Naive thymus-derived CD4-positive, alpha-beta T cell (primary cell): ENCODE measurements at regions of chr9 and their contacts with region 1.

Region 1: DNA sequence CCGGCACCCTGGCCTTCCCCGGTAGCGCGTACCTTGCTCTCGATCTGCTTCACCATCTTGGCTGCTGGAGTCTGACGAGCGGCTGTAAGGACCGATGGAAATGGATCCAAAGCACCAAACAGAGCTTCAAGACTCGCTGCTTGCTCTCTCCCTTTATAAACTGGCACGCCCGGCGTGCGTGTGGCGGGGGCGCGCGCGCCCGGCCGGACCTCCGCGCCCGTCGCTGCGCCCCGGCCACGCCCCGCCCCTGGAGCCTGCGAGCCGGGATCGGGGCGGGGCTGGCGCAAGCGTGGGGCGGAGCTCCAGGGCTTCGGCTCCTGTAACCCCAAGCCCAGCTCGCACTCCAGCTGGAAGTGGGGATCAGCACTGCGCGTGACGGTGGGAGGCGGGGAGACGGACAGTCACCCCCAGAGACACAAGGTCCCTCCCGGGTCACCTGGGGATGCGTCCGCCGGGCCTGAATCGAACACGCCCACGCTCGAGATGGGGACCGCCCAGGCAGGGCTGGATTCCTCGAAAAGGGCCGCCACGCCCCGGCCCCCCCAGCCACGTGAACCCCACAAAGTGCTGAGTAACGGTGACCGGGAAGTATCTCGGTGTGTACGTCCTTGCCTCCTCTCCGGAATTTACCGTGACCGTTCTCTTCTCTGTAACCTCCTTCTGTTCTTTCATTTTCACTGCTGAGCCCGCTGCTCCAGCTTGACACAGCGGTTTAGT is at the start of gene TXN:
- DNase-seq: peak; percentile 56 to 91 (median 74)
- ATAC-seq: peak; percentile 88
- H3K4me3 ChIP-seq: peak within 1 kb of the TSS; percentile 85
- H3K4me3 Mint-ChIP-seq: peak within 1 kb of the TSS; percentile 83 to 99 (median 96)
- H3K27ac ChIP-seq: peak within 1 kb of the TSS; percentile 65
- H3K27ac Mint-ChIP-seq: peak within 1 kb of the TSS; percentile 87 to 97 (median 89)
- H3K4me1 ChIP-seq: peaks cover 4 to 11% of the 10 kb centered on the region in 2 donors
- H3K4me1 Mint-ChIP-seq: peaks cover 16 to 52% (median 32%) of the 10 kb centered on the region in 7 donors
- H3K27me3 ChIP-seq: no peaks in the 10 kb centered on the region
- H3K27me3 Mint-ChIP-seq: peaks cover 0 to 5% (median 0%) of the 10 kb centered on the region in 5 donors
- total RNA-seq, gene TXN: 22.2 to 276 (median 24.9) TPM

Region 2: GRCh38 chr9:109012876-109013678 is 1243.5 kb before region 1 on chr9 and contains the start of gene CTNNAL1:
- CTCF ChIA-PET with region 1: no interaction called
- POLR2A ChIA-PET with region 1: no interaction called
- intact Hi-C with region 1: loop called (anchors 2 to 10 kb)
- DNase-seq: peak; percentile 68 to 88 (median 78)
- ATAC-seq: peak; percentile 98
- H3K4me3 ChIP-seq: peak within 1 kb of the TSS; percentile 72
- H3K4me3 Mint-ChIP-seq: peak within 1 kb of the TSS; percentile 93 to 99 (median 97)
- H3K27ac ChIP-seq: peak within 1 kb of the TSS; percentile 77
- H3K27ac Mint-ChIP-seq: peak within 1 kb of the TSS; percentile 79 to 95 (median 92)
- H3K4me1 ChIP-seq: peaks cover 6 to 13% of the 10 kb centered on the region in 2 donors
- H3K4me1 Mint-ChIP-seq: peaks cover 17 to 34% (median 21%) of the 10 kb centered on the region in 7 donors
- H3K27me3 ChIP-seq: no peaks in the 10 kb centered on the region
- H3K27me3 Mint-ChIP-seq: peaks cover 0 to 22% (median 4%) of the 10 kb centered on the region in 5 donors
- total RNA-seq, gene CTNNAL1: 1.1 to 9.9 (median 2.5) TPM

Region 3: GRCh38 chr9:109887079-109887478 is 369.5 kb before region 1 on chr9:
- CTCF ChIA-PET with region 1: no interaction called
- POLR2A ChIA-PET with region 1: no interaction called
- intact Hi-C with region 1: loop called in 1 of 2 experiments (anchors 2 kb)
- DNase-seq: no peak
- ATAC-seq: no peak
- H3K4me3 ChIP-seq: no peak overlapping the region
- H3K4me3 Mint-ChIP-seq: peak overlapping the region in 2 of 10 donors; percentile 14 to 73
- H3K27ac ChIP-seq: no peak overlapping the region
- H3K27ac Mint-ChIP-seq: peak overlapping the region in 3 of 9 donors; percentile 23 to 92 (median 88)
- H3K4me1 ChIP-seq: no peaks in the 10 kb centered on the region
- H3K4me1 Mint-ChIP-seq: peaks cover 7 to 82% (median 32%) of the 10 kb centered on the region in 7 donors
- H3K27me3 ChIP-seq: no peaks in the 10 kb centered on the region
- H3K27me3 Mint-ChIP-seq: no peaks in the 10 kb centered on the region

Region 4: DNA sequence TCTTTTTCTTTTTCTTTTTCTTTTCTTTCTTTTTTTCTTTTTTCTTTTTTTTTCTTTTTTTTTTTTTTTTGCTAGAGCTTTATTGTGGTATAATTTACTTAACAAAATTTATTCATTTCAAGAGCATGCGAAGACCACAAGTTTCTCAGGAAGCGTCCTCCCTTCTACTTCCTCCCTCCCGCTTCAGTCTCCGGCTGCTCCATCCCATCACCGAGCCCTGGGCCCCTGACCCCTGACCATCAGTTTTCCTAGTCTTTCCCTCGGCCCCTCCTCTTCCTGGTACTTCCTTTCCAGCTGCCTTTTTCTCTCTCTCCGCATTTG is 83.3 kb before region 1 on chr9:
- CTCF ChIA-PET with region 1: no interaction called
- POLR2A ChIA-PET with region 1: no interaction called
- intact Hi-C with region 1: loop called in 1 of 2 experiments (anchors 1 kb)
- DNase-seq: no peak
- ATAC-seq: no peak
- H3K4me3 ChIP-seq: no peak overlapping the region
- H3K4me3 Mint-ChIP-seq: peak overlapping the region in 8 of 10 donors; percentile 18 to 67 (median 50)
- H3K27ac ChIP-seq: no peak overlapping the region
- H3K27ac Mint-ChIP-seq: peak overlapping the region in 2 of 9 donors; percentile 28 to 64
- H3K4me1 ChIP-seq: no peaks in the 10 kb centered on the region
- H3K4me1 Mint-ChIP-seq: peaks cover 4 to 37% (median 7%) of the 10 kb centered on the region in 7 donors
- H3K27me3 ChIP-seq: no peaks in the 10 kb centered on the region
- H3K27me3 Mint-ChIP-seq: peaks cover 0 to 5% (median 0%) of the 10 kb centered on the region in 5 donors

Region 5: DNA sequence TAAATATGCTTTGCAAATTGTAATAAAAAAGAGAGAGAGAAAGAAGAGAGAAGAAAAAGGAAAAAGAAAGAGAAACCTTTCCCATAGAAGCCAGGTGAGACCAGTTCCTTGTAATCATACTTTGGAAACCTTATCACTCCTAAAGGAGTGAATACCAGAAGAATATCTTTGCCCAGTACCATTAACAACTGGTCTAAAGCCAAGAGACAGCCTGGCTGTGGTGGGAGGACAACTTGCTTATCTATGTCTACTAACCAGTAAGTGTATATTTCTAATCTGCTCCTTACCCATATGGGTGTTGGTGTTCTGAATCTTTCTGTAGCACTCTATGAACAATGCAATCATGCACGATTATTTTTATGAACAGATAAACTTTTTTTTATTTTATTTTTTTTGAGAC is 10.3 kb after region 1 on chr9:
- CTCF ChIA-PET with region 1: no interaction called
- POLR2A ChIA-PET with region 1: interaction called, 3 read pairs
- intact Hi-C with region 1: loop called in 1 of 2 experiments (anchors 1 kb)
- DNase-seq: no peak
- ATAC-seq: no peak
- H3K4me3 ChIP-seq: no peak overlapping the region
- H3K4me3 Mint-ChIP-seq: no peak overlapping the region
- H3K27ac ChIP-seq: no peak overlapping the region
- H3K27ac Mint-ChIP-seq: no peak overlapping the region
- H3K4me1 ChIP-seq: no peaks in the 10 kb centered on the region
- H3K4me1 Mint-ChIP-seq: peaks cover 0 to 2% (median 0%) of the 10 kb centered on the region in 7 donors
- H3K27me3 ChIP-seq: no peaks in the 10 kb centered on the region
- H3K27me3 Mint-ChIP-seq: peaks cover 0 to 34% (median 0%) of the 10 kb centered on the region in 5 donors

Region 6: GRCh38 chr9:111525056-111525977 is 1268.8 kb after region 1 on chr9 and contains the start of gene ZNF483:
- CTCF ChIA-PET with region 1: no interaction called
- POLR2A ChIA-PET with region 1: no interaction called
- intact Hi-C with region 1: loop called in 1 of 2 experiments (anchors 10 kb)
- DNase-seq: peak; percentile 60 to 89 (median 75)
- ATAC-seq: peak; percentile 90
- H3K4me3 ChIP-seq: peak within 1 kb of the TSS; percentile 84
- H3K4me3 Mint-ChIP-seq: peak within 1 kb of the TSS; percentile 86 to 98 (median 92)
- H3K27ac ChIP-seq: peak within 1 kb of the TSS; percentile 86
- H3K27ac Mint-ChIP-seq: peak within 1 kb of the TSS; percentile 90 to 99 (median 96)
- H3K4me1 ChIP-seq: peaks cover 4 to 6% of the 10 kb centered on the region in 2 donors
- H3K4me1 Mint-ChIP-seq: peaks cover 16 to 31% (median 21%) of the 10 kb centered on the region in 7 donors
- H3K27me3 ChIP-seq: no peaks in the 10 kb centered on the region
- H3K27me3 Mint-ChIP-seq: peaks cover 0 to 15% (median 5%) of the 10 kb centered on the region in 5 donors
- total RNA-seq, gene ZNF483: 3.0 to 37.1 (median 16.0) TPM